ENCODE measurements at regions of chr13 and their contacts with region 1.

Region 1: GRCh38 chr13:76198568-76199163 is 562.5 kb downstream of the LMO7 start:
- DNase-seq: no peak
- H3K4me3 ChIP-seq: no peak overlapping the region
- H3K27ac ChIP-seq: no peak overlapping the region
- H3K4me1 ChIP-seq: no peaks in the 10 kb centered on the region
- H3K27me3 ChIP-seq: peaks cover 3% of the 10 kb centered on the region
- CTCF ChIP-seq: no peak

Region 2: DNA sequence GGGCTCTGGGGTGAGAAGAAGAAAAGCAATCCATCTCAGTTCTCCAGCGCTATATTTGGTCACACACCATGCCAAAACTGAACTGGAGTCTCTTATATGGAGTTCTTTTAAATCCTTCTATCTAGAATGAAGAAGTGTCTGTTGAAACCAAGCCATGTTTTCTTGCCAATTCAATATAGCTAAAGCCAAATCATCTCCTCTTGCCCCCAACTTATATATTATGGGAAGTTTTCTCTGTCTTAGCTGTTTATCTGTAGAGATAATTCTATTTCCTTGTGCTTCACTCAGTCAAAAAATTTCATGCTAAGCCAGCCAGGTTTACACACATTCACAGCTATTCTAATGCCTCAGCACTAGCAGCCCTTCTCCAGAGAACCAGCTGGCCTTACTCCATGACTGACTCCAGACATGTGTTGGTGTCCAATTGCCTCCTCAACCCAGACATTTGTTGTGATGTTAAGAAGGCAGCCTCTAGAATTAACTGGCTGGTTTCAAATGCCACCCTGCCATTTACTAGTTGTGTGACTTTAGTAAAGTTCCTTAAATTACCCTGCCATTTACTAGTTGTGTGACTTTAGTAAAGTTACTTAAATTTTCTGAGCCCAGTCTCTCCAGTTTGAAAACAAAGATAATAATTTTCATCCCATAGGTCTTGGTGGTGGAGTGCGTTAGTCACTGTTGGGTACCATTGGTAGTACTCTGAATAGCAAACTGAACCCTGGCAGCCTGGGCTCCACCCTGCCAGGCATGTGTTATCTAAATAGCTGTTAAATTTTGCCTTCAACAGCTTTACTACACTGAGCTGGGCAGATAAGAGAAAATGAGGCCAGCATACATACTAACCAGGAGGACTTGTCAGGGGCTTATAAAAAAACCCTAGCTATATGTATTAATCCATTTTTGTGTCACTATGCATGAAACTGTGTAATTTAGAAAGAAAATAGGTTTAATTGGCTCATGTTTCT is 37.4 kb before region 1 on chr13:
- CTCF ChIA-PET with region 1: no interaction called
- POLR2A ChIA-PET with region 1: interaction called, 16 read pairs
- intact Hi-C with region 1: no loop called
- DNase-seq: no peak
- H3K4me3 ChIP-seq: no peak overlapping the region
- H3K27ac ChIP-seq: no peak overlapping the region
- H3K4me1 ChIP-seq: no peaks in the 10 kb centered on the region
- H3K27me3 ChIP-seq: no peaks in the 10 kb centered on the region
- CTCF ChIP-seq: no peak

Region 3: GRCh38 chr13:76213423-76213904 is 14.8 kb after region 1 on chr13:
- CTCF ChIA-PET with region 1: no interaction called
- POLR2A ChIA-PET with region 1: interaction called, 14 read pairs
- intact Hi-C with region 1: no loop called
- DNase-seq: no peak
- H3K4me3 ChIP-seq: no peak overlapping the region
- H3K27ac ChIP-seq: no peak overlapping the region
- H3K4me1 ChIP-seq: no peaks in the 10 kb centered on the region
- H3K27me3 ChIP-seq: no peaks in the 10 kb centered on the region
- CTCF ChIP-seq: no peak

Measured in A673 (cell line).